Lower leg skin (tissue), 4 donors: ENCODE measurements at regions of chrX and their contacts with region 1.

Region 1: DNA sequence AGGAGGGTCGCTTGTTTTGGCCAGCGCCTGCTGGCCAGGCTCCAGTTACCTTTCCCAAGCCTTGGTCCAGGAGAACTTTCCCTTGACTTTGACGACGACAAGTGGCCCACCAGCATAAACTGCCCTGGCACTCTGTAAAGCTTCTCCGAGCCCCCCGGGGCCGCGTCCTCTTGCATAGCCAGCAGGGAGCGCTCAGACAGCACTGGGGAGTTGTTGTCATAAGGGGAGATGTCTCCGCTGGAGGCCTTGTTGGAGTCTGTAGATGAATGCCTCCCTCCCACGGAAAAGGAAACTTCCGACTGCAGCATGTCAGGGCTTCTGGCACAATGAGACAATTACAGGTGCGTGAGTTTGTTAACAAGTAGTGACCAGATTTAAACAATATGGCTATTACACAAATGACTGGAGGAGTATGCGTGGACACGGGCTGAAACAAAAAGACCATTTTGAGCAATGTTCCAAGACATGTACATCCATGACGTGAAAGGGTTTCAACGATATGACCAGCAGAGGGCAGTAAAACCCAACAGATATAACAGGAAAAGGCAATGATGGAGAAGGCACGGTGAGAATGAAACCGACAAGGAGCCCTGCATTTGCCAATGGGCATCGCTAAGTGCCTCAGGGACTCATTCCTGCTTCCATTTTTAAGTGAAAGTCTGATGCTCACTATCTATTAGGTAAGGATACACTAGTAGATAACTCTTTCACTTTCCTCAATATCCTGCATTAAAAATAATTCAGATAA is 33.0 kb downstream of the HCCS start:
- DNase-seq: peak in 1 of 2 donors; percentile 61
- H3K4me3 ChIP-seq: no peak overlapping the region
- CTCF ChIP-seq: no peak
- POLR2A ChIP-seq: no peak

Region 2: GRCh38 chrX:11533211-11533651 is 389.1 kb after region 1 on chrX:
- intact Hi-C with region 1: loop called (anchors 2 kb)
- DNase-seq: no peak
- H3K4me3 ChIP-seq: no peak overlapping the region
- CTCF ChIP-seq: peak in 1 of 3 donors; percentile 33
- POLR2A ChIP-seq: no peak

Region 3: GRCh38 chrX:11770320-11770719 is 626.2 kb after region 1 on chrX:
- intact Hi-C with region 1: loop called (anchors 10 kb)
- DNase-seq: no peak
- H3K4me3 ChIP-seq: no peak overlapping the region
- CTCF ChIP-seq: no peak
- POLR2A ChIP-seq: no peak

Region 4: GRCh38 chrX:13131396-13132137 is 1987.5 kb after region 1 on chrX:
- intact Hi-C with region 1: no loop called
- DNase-seq: no peak
- H3K4me3 ChIP-seq: no peak overlapping the region
- CTCF ChIP-seq: no peak
- POLR2A ChIP-seq: no peak